Activated naive CD4-positive, alpha-beta T cell treated with anti-CD3 and anti-CD28 coated beads for 36 hours (primary cell): ENCODE measurements at regions of chr3 and their contacts with region 1.

Region 1: GRCh38 chr3:87082796-87083440 is 92.0 kb upstream of the VGLL3 start:
- DNase-seq: no peak
- H3K4me3 Mint-ChIP-seq: no peak overlapping the region
- H3K27ac Mint-ChIP-seq: no peak overlapping the region
- H3K4me1 Mint-ChIP-seq: peaks cover 6% of the 10 kb centered on the region
- H3K27me3 Mint-ChIP-seq: no peaks in the 10 kb centered on the region

Region 2: GRCh38 chr3:86969500-86970189 is 113.3 kb before region 1 on chr3:
- CTCF ChIA-PET with region 1: no interaction called
- intact Hi-C with region 1: loop called (anchors 1 kb)
- DNase-seq: peak; percentile 52
- H3K4me3 Mint-ChIP-seq: no peak overlapping the region
- H3K27ac Mint-ChIP-seq: no peak overlapping the region
- H3K4me1 Mint-ChIP-seq: no peaks in the 10 kb centered on the region
- H3K27me3 Mint-ChIP-seq: peaks cover 2% of the 10 kb centered on the region

Region 3: DNA sequence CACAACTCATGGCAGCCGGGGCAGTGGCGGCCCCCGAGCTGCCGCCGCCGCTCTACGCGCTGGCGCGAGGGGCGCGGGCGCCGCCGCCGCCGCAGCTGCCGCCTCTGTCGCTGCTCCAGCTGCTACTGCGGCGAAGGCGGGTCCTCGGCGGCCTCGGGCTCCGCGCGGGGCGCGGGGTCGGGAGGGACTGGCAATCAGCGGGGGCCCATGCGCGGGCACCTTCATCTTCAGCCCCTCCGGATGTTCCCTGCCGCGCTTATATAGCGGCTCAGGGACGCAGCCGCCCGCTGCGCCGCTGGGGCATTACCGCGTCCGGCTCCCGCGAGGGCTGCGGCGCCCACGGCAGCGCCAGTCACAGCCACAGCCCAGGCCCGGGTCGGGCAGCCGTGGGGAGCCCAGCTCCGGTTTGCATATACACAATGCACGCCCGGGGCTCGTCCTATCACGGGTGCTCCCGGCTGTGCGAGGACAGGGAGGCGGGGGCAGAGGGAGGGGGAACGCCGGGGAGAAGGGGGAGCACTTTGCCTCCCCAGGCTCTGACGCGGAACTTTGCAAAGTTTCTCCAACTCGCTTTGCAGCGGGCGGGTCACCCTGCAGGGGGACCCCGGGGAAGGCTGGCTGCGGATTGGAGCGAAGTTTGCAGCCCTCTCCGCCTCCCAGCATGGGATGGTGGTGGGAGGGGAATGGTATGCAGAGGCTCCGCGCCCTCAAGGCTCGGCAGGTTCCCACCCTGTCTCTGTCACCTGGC is 92.0 kb before region 1 on chr3 and contains the start of gene VGLL3:
- CTCF ChIA-PET with region 1: no interaction called
- intact Hi-C with region 1: loop called (anchors 5 kb)
- DNase-seq: peak; percentile 5
- H3K4me3 Mint-ChIP-seq: no peak within 1 kb of the TSS
- H3K27ac Mint-ChIP-seq: no peak within 1 kb of the TSS
- H3K4me1 Mint-ChIP-seq: peaks cover 3% of the 10 kb centered on the region
- H3K27me3 Mint-ChIP-seq: peaks cover 34% of the 10 kb centered on the region
- total RNA-seq, gene VGLL3: not detected

Region 4: GRCh38 chr3:87167628-87168456 is 84.9 kb after region 1 on chr3:
- CTCF ChIA-PET with region 1: interaction called, 10 read pairs
- intact Hi-C with region 1: loop called (anchors 1 kb)
- DNase-seq: peak; percentile 55
- H3K4me3 Mint-ChIP-seq: no peak overlapping the region
- H3K27ac Mint-ChIP-seq: no peak overlapping the region
- H3K4me1 Mint-ChIP-seq: peaks cover 4% of the 10 kb centered on the region
- H3K27me3 Mint-ChIP-seq: peaks cover 20% of the 10 kb centered on the region